WTC11 (cell line): ENCODE measurements at regions of chr3 and their contacts with region 1.

Region 1: GRCh38 chr3:42613462-42613861 is 13.0 kb downstream of the NKTR start:
- DNase-seq: no peak
- ATAC-seq: peak; percentile 39; the same call in 1 of the 2 replicates
- H3K4me3 Mint-ChIP-seq: no peak overlapping the region
- H3K27ac Mint-ChIP-seq: peak overlapping the region; percentile 1; the same call in 1 of the 2 replicates
- H3K4me1 Mint-ChIP-seq: peaks cover 18% of the 10 kb centered on the region
- H3K27me3 Mint-ChIP-seq: no peaks in the 10 kb centered on the region
- CTCF ChIP-seq: 0 out of 2 replicates have a peak, but pooled peaks have one; percentile 15

Region 2: GRCh38 chr3:42581709-42582473 is 31.6 kb before region 1 on chr3 and contains the start of gene SEC22C:
- CTCF ChIA-PET with region 1: interaction called, 17 read pairs
- POLR2A ChIA-PET with region 1: interaction called, 3 read pairs
- DNase-seq: peak; percentile 98
- ATAC-seq: peak; percentile 95
- H3K4me3 Mint-ChIP-seq: peak within 1 kb of the TSS; percentile 83
- H3K27ac Mint-ChIP-seq: peak within 1 kb of the TSS; percentile 92
- H3K4me1 Mint-ChIP-seq: peaks cover 41% of the 10 kb centered on the region
- H3K27me3 Mint-ChIP-seq: no peaks in the 10 kb centered on the region
- CTCF ChIP-seq: no peak
- total RNA-seq, gene SEC22C: 35.2 to 37.0 TPM (median 37.0 TPM) in 3 replicates

Region 3: GRCh38 chr3:42600111-42600988 is 13.1 kb before region 1 on chr3 and contains the start of gene NKTR:
- CTCF ChIA-PET with region 1: interaction called, 16 read pairs
- POLR2A ChIA-PET with region 1: interaction called, 3 read pairs
- DNase-seq: peak; percentile 100
- ATAC-seq: peak; percentile 96
- H3K4me3 Mint-ChIP-seq: peak within 1 kb of the TSS; percentile 89
- H3K27ac Mint-ChIP-seq: peak within 1 kb of the TSS; percentile 99
- H3K4me1 Mint-ChIP-seq: peaks cover 25% of the 10 kb centered on the region
- H3K27me3 Mint-ChIP-seq: no peaks in the 10 kb centered on the region
- CTCF ChIP-seq: no peak
- total RNA-seq, gene NKTR: 76.4 to 89.3 TPM (median 82.3 TPM) in 3 replicates